ENCODE measurements at regions of chr13 and their contacts with region 1.

Region 1: DNA sequence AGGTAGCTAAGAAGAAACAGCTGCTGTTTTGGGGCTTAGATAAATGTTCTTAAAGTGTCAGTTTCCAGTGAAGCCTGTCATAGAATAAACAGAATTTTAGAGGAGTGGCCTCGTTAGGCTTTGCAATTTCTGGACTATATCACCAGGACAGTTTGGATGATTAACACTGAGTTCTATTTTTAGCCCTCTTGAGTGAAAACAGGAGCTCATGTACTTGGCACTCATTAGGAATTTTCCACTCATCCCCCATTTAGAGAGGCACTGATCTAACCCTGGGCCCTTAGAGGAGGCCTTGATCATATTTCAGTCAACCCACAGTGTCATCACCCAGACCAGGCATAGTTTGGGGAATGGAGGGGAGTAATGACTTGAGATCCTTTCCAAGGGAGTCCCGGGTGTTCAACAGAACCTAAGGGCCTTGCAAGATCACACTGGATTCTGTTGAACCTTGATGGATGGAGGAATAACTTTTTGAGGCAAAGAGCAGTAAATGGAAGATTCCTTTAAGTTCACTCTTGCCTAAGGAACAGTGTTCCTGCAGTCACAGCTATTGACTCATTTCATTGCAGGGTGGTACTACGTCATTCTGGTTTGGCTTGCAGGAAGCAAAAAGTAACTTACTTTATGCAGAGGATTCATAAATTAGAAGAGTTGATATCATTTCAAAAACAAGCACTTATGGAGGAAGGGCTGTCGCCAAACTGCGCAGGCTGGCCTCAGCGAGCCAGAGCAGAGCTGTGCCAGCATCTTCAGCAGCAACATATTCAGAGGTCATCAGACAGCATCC is 160.2 kb downstream of the SLC7A1 start:
- DNase-seq: peak; percentile 26 to 57
- ATAC-seq: peak; percentile 81 to 92 (median 91)
- H3K4me3 ChIP-seq: no peak overlapping the region
- H3K27ac ChIP-seq: peak overlapping the region; percentile 67 to 92 (median 84)
- H3K4me1 ChIP-seq: peaks cover 9 to 80% (median 41%) of the 10 kb centered on the region in 9 donors
- H3K27me3 ChIP-seq: peaks cover 0 to 26% (median 0%) of the 10 kb centered on the region in 7 donors
- CTCF ChIP-seq: no peak

Region 2: DNA sequence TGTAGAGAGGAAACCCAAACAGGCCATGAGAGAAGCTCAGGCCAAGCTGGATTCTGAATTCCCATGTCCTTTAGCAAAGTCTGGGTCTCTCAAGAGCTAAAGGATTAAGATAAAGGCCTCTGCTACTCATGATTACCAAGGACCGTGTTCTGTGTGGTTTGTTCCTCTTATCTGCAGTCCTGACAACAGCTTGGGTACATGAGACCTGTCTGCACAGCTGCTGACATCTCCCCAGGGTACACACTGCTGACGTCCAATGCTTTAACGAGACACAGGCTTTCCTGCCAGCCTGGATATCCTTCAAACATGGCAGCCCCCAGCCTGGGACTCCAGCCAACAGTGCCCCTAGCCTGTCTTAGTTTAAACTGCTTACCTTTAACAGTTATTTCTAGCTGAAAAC is 50.9 kb before region 1 on chr13:
- intact Hi-C with region 1: loop called in 1 of 10 experiments (anchors 5 kb)
- DNase-seq: peak; percentile 17 to 31
- ATAC-seq: peak in 7 of 8 donors; percentile 29 to 96 (median 78)
- H3K4me3 ChIP-seq: no peak overlapping the region
- H3K27ac ChIP-seq: peak overlapping the region in 2 of 10 donors; percentile 10 to 15
- H3K4me1 ChIP-seq: peaks cover 0 to 19% (median 7%) of the 10 kb centered on the region in 9 donors
- H3K27me3 ChIP-seq: no peaks in the 10 kb centered on the region
- CTCF ChIP-seq: no peak

Region 3: DNA sequence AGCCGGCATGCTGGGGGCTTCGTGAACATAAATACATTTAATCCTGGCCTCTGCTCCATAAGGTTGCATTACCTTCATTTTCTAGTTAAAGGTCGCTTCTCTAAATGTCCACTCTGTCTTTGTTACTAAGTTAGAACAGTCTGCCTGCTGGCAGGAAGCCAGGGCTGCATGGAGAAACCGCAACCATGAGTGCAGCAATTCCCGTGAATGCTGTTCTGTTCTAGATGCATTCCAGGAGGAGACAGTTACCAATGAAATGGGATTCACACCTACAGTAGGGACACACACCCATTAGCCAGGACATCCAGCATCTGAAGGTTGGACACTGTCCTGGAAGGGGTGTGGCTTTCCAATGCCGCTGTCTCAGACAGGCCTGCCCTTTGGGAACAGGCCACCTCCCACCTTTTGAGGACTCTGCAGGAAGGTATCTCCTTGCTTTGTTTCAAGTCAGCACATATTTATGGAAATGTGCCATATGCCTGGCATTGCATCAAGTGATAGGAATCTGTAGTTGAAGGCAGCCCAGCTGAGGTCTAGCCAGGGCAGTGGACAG is 30.5 kb after region 1 on chr13:
- intact Hi-C with region 1: loop called in 3 of 10 experiments (anchors 2 to 5 kb)
- DNase-seq: peak; percentile 32 to 38
- ATAC-seq: peak; percentile 31 to 78 (median 70)
- H3K4me3 ChIP-seq: no peak overlapping the region
- H3K27ac ChIP-seq: peak overlapping the region in 9 of 10 donors; percentile 24 to 81 (median 73)
- H3K4me1 ChIP-seq: peaks cover 0 to 37% (median 16%) of the 10 kb centered on the region in 9 donors
- H3K27me3 ChIP-seq: no peaks in the 10 kb centered on the region
- CTCF ChIP-seq: no peak

Region 4: DNA sequence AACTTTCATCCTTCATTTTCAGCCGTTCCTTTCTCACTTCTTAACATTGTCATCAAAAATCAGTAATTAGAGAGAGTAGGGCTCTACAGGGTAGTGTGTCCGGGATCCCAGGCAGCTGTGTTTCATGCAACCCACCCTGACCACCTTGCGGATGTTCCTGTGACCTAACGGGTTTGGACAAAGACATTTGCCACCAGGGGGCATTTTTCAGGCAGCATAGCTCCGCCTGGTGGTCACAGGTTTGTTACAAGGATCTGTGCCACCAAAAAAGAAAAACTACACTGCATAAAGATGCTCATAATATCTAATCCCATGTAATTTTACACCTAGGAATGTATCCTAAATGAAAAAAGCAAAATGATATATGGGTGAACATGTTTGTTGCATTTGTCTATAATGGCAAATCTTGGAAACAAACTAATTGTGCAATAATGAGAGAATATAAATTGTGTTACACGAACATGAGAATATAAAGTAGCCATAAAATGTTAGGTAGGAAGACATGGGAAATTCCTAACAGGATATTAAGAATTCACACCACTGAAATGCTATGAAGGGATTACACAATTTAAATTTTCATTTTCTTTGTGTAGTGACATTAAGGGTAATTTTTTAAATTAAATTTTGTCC is 37.1 kb after region 1 on chr13:
- intact Hi-C with region 1: loop called in 2 of 10 experiments (anchors 5 kb)
- DNase-seq: peak in 1 of 2 donors; percentile 39
- ATAC-seq: peak in 4 of 8 donors; percentile 39 to 53 (median 52)
- H3K4me3 ChIP-seq: no peak overlapping the region
- H3K27ac ChIP-seq: peak overlapping the region in 1 of 10 donors; percentile 28
- H3K4me1 ChIP-seq: peaks cover 0 to 5% (median 0%) of the 10 kb centered on the region in 9 donors
- H3K27me3 ChIP-seq: peaks cover 0 to 3% (median 0%) of the 10 kb centered on the region in 7 donors
- CTCF ChIP-seq: peak; percentile 42 to 91 (median 72)

Region 5: DNA sequence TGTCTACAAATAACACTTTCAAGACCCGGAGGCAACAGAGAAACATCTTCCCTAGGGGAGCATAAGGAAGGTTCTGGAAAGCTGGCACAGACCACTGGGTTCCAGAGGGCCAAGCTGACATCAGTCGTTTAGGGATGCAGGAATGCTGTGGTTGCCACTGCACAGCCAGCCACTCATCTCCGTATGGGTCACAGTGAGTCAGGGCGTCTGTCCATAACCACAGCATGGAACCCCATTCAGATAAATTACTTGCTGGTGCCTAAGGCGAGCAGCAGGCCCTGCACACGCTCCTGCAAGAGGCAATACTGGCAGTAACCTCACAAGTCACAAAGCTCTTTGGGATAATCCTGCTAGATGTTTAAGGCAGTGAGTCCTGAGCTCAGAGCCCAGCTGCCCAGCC is 556.0 kb after region 1 on chr13:
- intact Hi-C with region 1: no loop called
- DNase-seq: no peak
- ATAC-seq: no peak
- H3K4me3 ChIP-seq: no peak overlapping the region
- H3K27ac ChIP-seq: no peak overlapping the region
- H3K4me1 ChIP-seq: no peaks in the 10 kb centered on the region
- H3K27me3 ChIP-seq: peaks cover 0 to 5% (median 0%) of the 10 kb centered on the region in 7 donors
- CTCF ChIP-seq: no peak

Region 6: DNA sequence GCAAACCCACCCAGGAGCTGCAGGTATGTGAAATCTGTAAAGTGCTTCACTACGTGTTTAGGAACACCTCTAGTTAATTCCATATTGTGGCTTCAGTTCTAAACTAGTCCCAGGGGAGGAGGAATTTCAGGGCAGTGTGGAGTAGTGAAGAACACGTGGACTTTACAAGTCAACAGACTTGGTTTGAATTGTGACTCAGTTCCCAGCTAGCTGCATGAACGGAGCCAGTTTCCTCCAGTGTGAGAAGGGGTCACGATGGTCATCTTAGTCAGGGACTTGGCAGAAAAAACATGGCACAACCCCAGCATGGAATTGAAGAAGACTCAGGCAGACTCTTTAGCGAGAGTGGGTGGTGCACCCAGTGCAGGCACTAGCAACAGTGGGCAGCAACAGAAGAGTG is 590.8 kb after region 1 on chr13:
- intact Hi-C with region 1: no loop called
- DNase-seq: no peak
- ATAC-seq: no peak
- H3K4me3 ChIP-seq: no peak overlapping the region
- H3K27ac ChIP-seq: no peak overlapping the region
- H3K4me1 ChIP-seq: no peaks in the 10 kb centered on the region
- H3K27me3 ChIP-seq: peaks cover 0 to 10% (median 0%) of the 10 kb centered on the region in 7 donors
- CTCF ChIP-seq: no peak